Posterior cingulate gyrus (tissue), 11 donors: ENCODE measurements at regions of chr9 and their contacts with region 1.

Region 1: GRCh38 chr9:92616655-92617111 is 53.2 kb downstream of the IPPK start:
- DNase-seq: no peak

Region 2: DNA sequence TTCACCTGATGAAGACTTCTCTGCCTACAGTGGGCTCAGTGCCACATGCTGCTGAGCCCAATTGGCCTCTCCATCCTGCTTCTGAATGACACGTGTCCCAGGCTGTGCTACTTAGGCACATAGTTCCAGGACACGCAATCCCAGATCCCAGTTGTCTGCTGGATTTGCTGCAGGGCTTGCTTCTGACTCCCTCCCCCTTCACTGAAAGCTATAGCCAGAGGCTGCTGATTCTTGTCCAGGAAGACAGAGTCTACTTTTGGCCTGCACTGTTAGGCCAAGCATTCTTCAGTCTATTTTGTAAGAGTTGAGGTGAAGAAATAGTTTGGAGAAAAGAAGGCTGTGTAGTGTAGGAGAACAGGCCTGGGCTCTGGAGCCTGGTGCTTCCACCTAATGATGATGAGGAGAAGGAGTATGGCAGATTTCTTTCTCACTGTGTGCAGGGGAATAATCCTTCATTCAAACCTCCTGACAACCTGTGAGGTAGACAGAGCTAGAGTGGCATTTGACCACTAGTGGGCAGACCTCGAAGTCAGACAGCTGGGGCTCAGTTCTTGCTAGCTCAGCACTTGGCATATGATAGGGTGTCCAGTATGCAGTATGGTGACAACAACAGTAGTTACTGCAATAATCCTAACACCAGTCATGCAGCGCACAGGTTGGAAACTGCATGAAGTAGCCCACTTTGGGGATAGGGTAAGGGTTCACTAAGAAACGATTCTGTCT is 114.9 kb before region 1 on chr9:
- intact Hi-C with region 1: loop called (anchors 10 kb)
- DNase-seq: peak in 1 of 10 donors; percentile 14